ENCODE measurements at regions of chr10 and their contacts with region 1.

Region 1: DNA sequence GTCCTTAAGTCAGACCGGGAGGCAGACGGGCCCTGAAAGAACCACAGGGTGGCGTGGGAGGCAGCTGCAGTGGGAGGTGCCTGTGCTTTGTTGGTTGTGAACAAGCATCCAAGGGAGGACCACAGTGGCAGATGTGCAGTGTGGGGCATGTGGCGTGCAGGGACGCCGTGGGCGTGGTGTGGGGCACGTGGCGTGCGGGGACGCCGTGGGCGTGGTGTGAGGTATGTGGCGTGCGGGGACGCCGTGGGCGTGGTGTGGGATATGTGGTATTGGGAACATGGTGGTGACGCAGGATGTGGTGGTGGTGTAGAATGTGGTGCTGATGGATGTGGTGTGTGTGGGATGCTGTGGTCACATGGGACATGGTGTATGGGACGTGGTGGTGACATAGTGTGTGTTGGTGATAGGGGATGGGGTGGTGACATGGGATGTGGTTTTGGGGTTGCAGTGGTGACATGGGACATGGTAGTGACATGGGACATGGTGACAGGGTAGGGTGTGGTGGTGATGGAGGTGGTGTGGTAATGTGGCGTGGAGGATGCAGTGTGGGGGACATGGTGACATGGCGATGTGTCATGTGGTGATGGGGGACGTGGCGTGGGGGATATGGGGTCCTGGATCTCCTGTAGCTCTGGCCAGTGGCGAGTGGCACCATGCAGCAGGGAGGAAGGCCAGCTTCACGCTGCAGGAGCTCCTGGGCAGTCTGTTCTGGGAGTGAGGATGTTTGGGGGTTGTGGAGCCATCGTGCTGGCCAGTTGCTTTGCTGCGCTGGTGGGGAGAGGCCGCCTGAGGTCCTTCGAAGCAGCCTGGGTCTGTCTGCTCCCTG is 78.8 kb downstream of the INPP5A start:
- DNase-seq: no peak

Region 2: GRCh38 chr10:132463333-132464252 is 152.8 kb before region 1 on chr10:
- in situ Hi-C with region 1: loop called (anchors 5 kb)
- DNase-seq: peak; percentile 51